ENCODE measurements at regions of chr7 and their contacts with region 1.

Region 1: DNA sequence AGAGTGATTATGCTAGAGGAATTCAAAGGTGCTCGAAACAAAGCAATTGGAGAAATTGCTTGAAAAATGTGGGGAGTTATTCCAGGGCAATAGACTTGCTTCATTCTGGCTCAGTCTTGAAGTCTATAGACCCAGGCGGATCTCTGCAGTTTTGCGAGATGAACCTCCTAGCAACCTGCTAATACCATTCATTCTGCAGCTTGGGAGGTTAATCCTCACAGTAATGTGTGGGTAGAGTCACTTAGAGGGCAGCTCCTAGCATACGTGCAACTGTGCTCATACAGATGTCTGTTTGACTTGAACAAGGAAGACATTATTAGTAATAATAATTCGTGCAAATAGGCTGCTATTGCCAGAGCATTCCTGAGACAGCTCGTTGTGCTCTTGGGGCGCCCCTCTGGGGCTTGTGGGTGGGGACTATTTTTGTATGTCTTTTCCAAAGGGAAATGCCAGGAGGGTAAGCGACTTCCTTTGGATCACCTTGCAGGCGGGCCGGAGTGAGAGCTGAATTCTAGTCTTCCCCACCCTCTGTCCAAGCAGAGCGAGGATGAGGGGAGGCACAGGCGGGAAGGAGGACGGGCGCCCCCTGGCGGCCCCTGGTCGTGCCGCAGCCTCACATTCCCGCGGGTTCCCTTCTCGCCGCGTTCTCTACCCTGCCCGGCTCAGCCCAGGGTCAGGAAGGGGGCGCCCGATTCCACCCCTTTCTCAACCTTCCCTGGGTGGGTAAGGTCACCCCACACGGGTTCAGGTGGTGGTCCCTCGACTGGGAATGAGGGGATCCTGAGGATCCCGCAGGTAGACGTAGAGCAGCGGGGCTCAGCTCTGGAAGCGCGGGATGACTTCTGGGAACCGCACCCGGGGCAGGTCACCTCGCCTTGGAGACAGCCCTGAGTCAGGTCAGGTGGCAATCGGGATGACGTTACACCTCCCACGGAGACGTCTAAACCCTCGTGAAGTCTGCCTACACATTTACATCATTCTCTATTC is 241.5 kb downstream of the PHTF2 start:
- DNase-seq: peak; percentile 58
- ATAC-seq: peak; percentile 57
- H3K4me3 ChIP-seq: no peak overlapping the region
- H3K4me3 Mint-ChIP-seq: no peak overlapping the region
- H3K27ac ChIP-seq: no peak overlapping the region
- H3K27ac Mint-ChIP-seq: no peak overlapping the region
- H3K4me1 ChIP-seq: no peaks in the 10 kb centered on the region
- H3K4me1 Mint-ChIP-seq: peaks cover 2% of the 10 kb centered on the region
- H3K27me3 ChIP-seq: peaks cover 0 to 11% (median 4%) of the 10 kb centered on the region in 4 experiments
- H3K27me3 Mint-ChIP-seq: peaks cover 25% of the 10 kb centered on the region
- CTCF ChIP-seq: peak; percentile 90

Region 2: GRCh38 chr7:77651573-77652162 is 388.4 kb before region 1 on chr7:
- CTCF ChIA-PET with region 1: interaction called, 57 read pairs
- POLR2A ChIA-PET with region 1: no interaction called
- intact Hi-C with region 1: no loop called
- DNase-seq: peak; percentile 62
- ATAC-seq: no peak
- H3K4me3 ChIP-seq: no peak overlapping the region
- H3K4me3 Mint-ChIP-seq: no peak overlapping the region
- H3K27ac ChIP-seq: no peak overlapping the region
- H3K27ac Mint-ChIP-seq: no peak overlapping the region
- H3K4me1 ChIP-seq: no peaks in the 10 kb centered on the region
- H3K4me1 Mint-ChIP-seq: no peaks in the 10 kb centered on the region
- H3K27me3 ChIP-seq: no peaks in the 10 kb centered on the region
- H3K27me3 Mint-ChIP-seq: no peaks in the 10 kb centered on the region
- CTCF ChIP-seq: peak; percentile 89

Region 3: GRCh38 chr7:77657427-77658224 is 382.5 kb before region 1 on chr7:
- CTCF ChIA-PET with region 1: interaction called, 57 read pairs
- POLR2A ChIA-PET with region 1: no interaction called
- intact Hi-C with region 1: no loop called
- DNase-seq: peak; percentile 54
- ATAC-seq: peak; percentile 39
- H3K4me3 ChIP-seq: no peak overlapping the region
- H3K4me3 Mint-ChIP-seq: no peak overlapping the region
- H3K27ac ChIP-seq: no peak overlapping the region
- H3K27ac Mint-ChIP-seq: no peak overlapping the region
- H3K4me1 ChIP-seq: no peaks in the 10 kb centered on the region
- H3K4me1 Mint-ChIP-seq: no peaks in the 10 kb centered on the region
- H3K27me3 ChIP-seq: no peaks in the 10 kb centered on the region
- H3K27me3 Mint-ChIP-seq: no peaks in the 10 kb centered on the region
- CTCF ChIP-seq: peak; percentile 63

Region 4: DNA sequence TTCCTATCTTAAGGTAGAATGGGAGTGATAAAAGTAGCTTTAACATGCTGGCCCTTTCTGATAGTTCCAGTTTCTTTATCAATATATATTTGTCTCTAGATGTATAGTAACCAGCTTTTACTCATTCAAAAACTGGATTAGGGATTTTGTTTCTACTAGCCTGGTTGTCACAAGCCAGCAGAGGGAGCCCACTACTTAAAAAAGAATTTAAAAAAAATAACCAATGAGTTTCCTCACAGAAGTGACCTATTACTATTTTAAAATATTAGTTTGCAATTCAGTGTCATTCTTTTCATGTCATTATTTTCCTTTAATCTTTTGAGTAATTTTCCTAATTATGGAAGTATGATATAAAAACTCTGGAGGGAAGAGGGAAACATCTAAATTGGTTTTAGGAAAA is 99.4 kb before region 1 on chr7:
- CTCF ChIA-PET with region 1: interaction called, 7 read pairs
- POLR2A ChIA-PET with region 1: no interaction called
- intact Hi-C with region 1: loop called (anchors 1 kb)
- DNase-seq: peak; percentile 15
- ATAC-seq: no peak
- H3K4me3 ChIP-seq: no peak overlapping the region
- H3K4me3 Mint-ChIP-seq: no peak overlapping the region
- H3K27ac ChIP-seq: no peak overlapping the region
- H3K27ac Mint-ChIP-seq: no peak overlapping the region
- H3K4me1 ChIP-seq: peaks cover under 1 to 3% of the 10 kb centered on the region in 2 donors
- H3K4me1 Mint-ChIP-seq: peaks cover 14% of the 10 kb centered on the region
- H3K27me3 ChIP-seq: no peaks in the 10 kb centered on the region
- H3K27me3 Mint-ChIP-seq: no peaks in the 10 kb centered on the region
- CTCF ChIP-seq: peak; percentile 73

Region 5: DNA sequence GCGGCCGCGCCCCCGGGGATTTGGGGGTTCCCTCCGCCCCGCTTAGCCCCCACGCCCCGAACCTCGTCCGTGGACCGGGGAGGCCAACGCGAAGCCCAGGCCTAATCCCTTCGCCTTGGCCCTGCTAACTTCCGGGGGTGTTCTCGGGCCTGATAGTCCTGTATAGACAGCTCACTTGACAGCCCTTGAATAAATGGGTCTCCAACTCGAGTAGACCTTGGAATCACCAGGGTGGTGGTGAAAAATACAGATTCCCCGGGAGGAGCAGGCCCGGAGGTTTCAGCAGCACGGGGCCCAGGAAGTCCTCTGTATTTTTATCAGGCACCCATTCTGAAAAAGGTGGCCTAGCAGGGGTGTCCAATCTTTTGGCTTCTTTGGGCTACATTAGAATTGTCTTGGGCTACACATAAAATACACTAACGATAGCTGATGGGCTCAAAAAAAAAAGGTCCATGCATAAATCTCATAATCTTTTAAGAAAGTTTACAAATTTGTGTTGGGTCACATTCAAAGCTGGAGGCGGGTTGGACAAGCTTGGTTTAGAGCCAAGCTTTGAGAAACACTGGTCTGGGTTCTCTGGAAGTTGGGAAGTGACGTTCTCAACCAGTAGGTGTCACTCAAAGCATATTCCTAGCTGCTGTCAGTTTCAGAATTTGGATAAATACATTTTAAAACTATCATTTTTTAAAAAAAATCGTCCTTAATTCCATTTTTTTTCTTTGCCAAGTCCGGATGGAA is 19.8 kb before region 1 on chr7:
- CTCF ChIA-PET with region 1: interaction called, 71 read pairs
- POLR2A ChIA-PET with region 1: no interaction called
- intact Hi-C with region 1: loop called (anchors 1 kb)
- DNase-seq: peak; percentile 67
- ATAC-seq: peak; percentile 44
- H3K4me3 ChIP-seq: peak overlapping the region; percentile 14 to 87 (median 77)
- H3K4me3 Mint-ChIP-seq: peak overlapping the region; percentile 85
- H3K27ac ChIP-seq: peak overlapping the region in 1 of 2 donors; percentile 52
- H3K27ac Mint-ChIP-seq: peak overlapping the region; percentile 72
- H3K4me1 ChIP-seq: peaks cover 11 to 12% of the 10 kb centered on the region in 2 donors
- H3K4me1 Mint-ChIP-seq: peaks cover 15% of the 10 kb centered on the region
- H3K27me3 ChIP-seq: peaks cover 0 to 2% (median 0%) of the 10 kb centered on the region in 4 experiments
- H3K27me3 Mint-ChIP-seq: peaks cover 9% of the 10 kb centered on the region
- CTCF ChIP-seq: peak; percentile 80

Region 6: GRCh38 chr7:78052112-78052511 is 12.0 kb after region 1 on chr7:
- CTCF ChIA-PET with region 1: interaction called, 23 read pairs
- POLR2A ChIA-PET with region 1: no interaction called
- intact Hi-C with region 1: no loop called
- DNase-seq: no peak
- ATAC-seq: no peak
- H3K4me3 ChIP-seq: no peak overlapping the region
- H3K4me3 Mint-ChIP-seq: no peak overlapping the region
- H3K27ac ChIP-seq: no peak overlapping the region
- H3K27ac Mint-ChIP-seq: no peak overlapping the region
- H3K4me1 ChIP-seq: no peaks in the 10 kb centered on the region
- H3K4me1 Mint-ChIP-seq: no peaks in the 10 kb centered on the region
- H3K27me3 ChIP-seq: no peaks in the 10 kb centered on the region
- H3K27me3 Mint-ChIP-seq: peaks cover 10% of the 10 kb centered on the region
- CTCF ChIP-seq: no peak

Measured in B cell (primary cell).